ENCODE measurements at regions of chr2 and their contacts with region 1.

Region 1: GRCh38 chr2:166361351-166362153 is 14.2 kb downstream of the SCN9A start:
- DNase-seq: no peak
- H3K4me3 ChIP-seq: no peak overlapping the region
- H3K27ac ChIP-seq: no peak overlapping the region
- H3K27me3 ChIP-seq: no peaks in the 10 kb centered on the region
- CTCF ChIP-seq: peak; percentile 60

Region 2: GRCh38 chr2:166211079-166211478 is 150.5 kb before region 1 on chr2:
- CTCF ChIA-PET with region 1: no interaction called
- POLR2A ChIA-PET with region 1: no interaction called
- DNase-seq: no peak
- H3K4me3 ChIP-seq: no peak overlapping the region
- H3K27ac ChIP-seq: no peak overlapping the region
- H3K27me3 ChIP-seq: no peaks in the 10 kb centered on the region
- CTCF ChIP-seq: no peak

Region 3: DNA sequence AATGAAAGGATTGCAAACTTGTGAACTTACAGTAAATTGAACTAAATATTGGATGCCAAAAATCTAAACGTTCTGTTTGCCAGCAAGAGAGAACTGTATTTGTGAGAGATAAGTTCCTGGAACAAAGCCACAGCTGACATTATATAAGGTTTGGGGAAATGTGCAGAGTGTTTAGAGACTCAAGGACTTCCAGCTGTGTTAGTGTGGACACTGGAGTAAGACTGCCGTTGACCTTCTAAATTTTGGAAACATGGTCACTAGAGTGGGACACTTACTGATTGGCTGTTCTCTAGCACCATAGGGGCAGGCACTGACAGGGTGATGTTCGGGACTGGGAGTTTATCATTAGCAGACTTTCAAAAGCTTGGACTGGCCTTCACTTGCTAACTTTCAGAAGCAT is 26.3 kb before region 1 on chr2:
- CTCF ChIA-PET with region 1: interaction called, 15 read pairs
- POLR2A ChIA-PET with region 1: no interaction called
- DNase-seq: no peak
- H3K4me3 ChIP-seq: no peak overlapping the region
- H3K27ac ChIP-seq: no peak overlapping the region
- H3K27me3 ChIP-seq: no peaks in the 10 kb centered on the region
- CTCF ChIP-seq: no peak

Region 4: GRCh38 chr2:166344286-166345113 is 17.1 kb before region 1 on chr2:
- CTCF ChIA-PET with region 1: interaction called, 25 read pairs
- POLR2A ChIA-PET with region 1: interaction called, 3 read pairs
- DNase-seq: peak; percentile 63
- H3K4me3 ChIP-seq: no peak overlapping the region
- H3K27ac ChIP-seq: no peak overlapping the region
- H3K27me3 ChIP-seq: no peaks in the 10 kb centered on the region
- CTCF ChIP-seq: no peak

Region 5: GRCh38 chr2:166351319-166351718 is 10.2 kb before region 1 on chr2:
- CTCF ChIA-PET with region 1: interaction called, 25 read pairs
- POLR2A ChIA-PET with region 1: interaction called, 6 read pairs
- DNase-seq: no peak
- H3K4me3 ChIP-seq: no peak overlapping the region
- H3K27ac ChIP-seq: no peak overlapping the region
- H3K27me3 ChIP-seq: no peaks in the 10 kb centered on the region
- CTCF ChIP-seq: no peak

Region 6: DNA sequence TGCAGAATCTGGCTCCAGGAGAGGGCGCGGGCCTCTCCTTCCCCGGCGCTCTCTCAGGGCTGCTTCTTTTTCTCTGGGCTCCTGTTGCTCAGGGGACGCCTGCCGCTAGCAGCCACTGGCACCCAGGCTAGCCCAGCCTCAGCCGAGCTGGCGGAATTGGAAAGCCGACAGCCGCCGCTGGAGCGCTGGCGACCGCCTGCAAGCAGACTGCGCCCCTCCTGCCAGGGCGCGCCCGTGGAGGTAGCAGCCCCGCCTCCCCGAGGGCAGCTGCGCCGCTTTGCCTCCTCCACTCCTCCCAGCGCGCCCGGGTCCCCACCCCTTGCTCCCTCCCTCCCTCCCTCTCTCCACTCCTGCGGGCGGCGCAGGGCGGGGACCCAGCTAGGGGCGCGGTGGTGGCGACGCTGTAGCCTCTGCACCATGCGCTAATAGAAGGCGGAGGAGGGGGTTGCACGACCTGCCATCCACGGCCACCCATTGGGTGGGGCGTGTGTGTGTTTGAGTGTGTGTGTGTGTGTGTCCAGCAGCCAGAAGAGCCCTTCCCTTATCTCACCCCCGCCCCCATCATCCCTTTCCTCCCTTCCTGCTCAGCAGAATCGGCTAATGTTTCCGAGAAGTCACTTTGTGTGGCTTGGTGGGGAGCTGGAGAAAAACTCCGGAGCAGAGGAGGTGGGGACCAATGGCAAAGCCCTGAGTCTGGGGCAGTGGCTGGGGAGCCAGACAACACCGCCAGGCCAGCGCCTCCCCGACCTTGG is 14.4 kb after region 1 on chr2 and contains the start of gene SCN9A:
- CTCF ChIA-PET with region 1: interaction called, 15 read pairs
- POLR2A ChIA-PET with region 1: interaction called, 3 read pairs
- DNase-seq: no peak
- H3K4me3 ChIP-seq: peak within 1 kb of the TSS; percentile 81
- H3K27ac ChIP-seq: peak within 1 kb of the TSS; percentile 73
- H3K27me3 ChIP-seq: no peaks in the 10 kb centered on the region
- CTCF ChIP-seq: peak; percentile 4; the same call in 1 of the 2 replicates
- polyA plus RNA-seq, gene SCN9A: 39.9 and 56.8 TPM in 2 replicates

Region 7: DNA sequence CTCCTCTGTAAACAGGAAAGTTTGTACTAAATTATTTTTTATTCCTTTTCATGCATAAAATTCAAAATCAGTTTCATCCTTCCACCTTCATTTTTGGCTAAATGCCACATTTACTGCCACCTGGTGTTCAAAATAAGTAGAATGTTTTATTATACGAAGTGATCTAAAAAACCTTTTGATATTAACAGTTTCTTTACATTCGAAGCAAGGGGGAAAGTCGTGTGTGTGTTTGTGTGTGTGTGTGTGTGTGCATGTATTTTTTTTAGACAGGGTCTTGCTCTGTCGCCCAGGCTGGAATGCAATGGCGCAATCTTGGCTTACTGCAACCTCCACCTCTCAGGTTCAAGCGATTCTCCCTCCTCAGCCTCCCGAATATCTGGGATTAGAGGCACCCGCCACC is 23.2 kb after region 1 on chr2:
- CTCF ChIA-PET with region 1: interaction called, 40 read pairs
- POLR2A ChIA-PET with region 1: no interaction called
- DNase-seq: no peak
- H3K4me3 ChIP-seq: no peak overlapping the region
- H3K27ac ChIP-seq: no peak overlapping the region
- H3K27me3 ChIP-seq: no peaks in the 10 kb centered on the region
- CTCF ChIP-seq: peak; percentile 50